CD4-positive, alpha-beta memory T cell (primary cell): ENCODE measurements at regions of chr16 and their contacts with region 1.

Region 1: DNA sequence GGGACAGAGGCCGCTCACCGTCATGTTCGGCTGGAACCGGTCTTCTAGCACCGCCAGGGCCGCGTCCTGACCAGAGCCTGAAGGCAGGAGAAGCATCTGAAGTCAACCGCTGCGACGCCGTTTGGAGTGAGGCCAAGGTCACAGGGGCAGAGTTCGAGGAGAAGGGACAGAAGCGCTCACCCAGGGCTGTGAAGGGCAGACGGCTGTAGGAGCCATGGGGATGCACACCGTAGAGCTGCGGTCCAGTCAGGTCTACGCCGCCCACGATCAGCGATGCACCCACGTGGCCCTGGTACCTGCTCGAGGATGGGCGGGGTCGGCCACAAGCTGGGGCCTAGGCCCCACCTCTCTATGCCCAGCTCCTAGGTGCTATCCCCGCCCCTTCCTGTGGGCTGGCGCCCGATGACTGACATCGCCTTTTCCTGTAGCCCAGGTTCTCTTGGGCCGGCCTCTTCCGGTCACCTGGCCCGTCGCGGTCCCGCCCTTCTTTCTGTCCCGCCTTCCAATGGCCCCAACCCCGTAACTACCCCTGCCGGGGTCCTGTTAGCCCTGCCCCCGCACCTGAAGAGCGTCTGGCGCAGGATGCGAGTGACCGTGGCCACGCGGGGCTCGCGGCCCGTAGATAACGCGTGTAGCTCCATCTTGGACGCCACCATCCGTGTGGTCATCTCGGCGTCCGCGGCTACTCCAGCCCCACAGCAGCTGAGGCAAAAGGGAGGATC is 1.1 kb downstream of the PSMB10 start:
- DNase-seq: peak; percentile 91 to 99 (median 95)
- H3K4me3 ChIP-seq: peak overlapping the region; percentile 81 to 98
- H3K4me3 Mint-ChIP-seq: peak overlapping the region; percentile 96 to 100 (median 99)
- H3K27ac ChIP-seq: peak overlapping the region; percentile 81
- H3K27ac Mint-ChIP-seq: peak overlapping the region; percentile 96 to 99 (median 98)
- H3K4me1 ChIP-seq: peaks cover 35% of the 10 kb centered on the region
- H3K4me1 Mint-ChIP-seq: peaks cover 21 to 50% (median 40%) of the 10 kb centered on the region in 4 donors
- H3K27me3 ChIP-seq: no peaks in the 10 kb centered on the region
- H3K27me3 Mint-ChIP-seq: no peaks in the 10 kb centered on the region

Region 2: DNA sequence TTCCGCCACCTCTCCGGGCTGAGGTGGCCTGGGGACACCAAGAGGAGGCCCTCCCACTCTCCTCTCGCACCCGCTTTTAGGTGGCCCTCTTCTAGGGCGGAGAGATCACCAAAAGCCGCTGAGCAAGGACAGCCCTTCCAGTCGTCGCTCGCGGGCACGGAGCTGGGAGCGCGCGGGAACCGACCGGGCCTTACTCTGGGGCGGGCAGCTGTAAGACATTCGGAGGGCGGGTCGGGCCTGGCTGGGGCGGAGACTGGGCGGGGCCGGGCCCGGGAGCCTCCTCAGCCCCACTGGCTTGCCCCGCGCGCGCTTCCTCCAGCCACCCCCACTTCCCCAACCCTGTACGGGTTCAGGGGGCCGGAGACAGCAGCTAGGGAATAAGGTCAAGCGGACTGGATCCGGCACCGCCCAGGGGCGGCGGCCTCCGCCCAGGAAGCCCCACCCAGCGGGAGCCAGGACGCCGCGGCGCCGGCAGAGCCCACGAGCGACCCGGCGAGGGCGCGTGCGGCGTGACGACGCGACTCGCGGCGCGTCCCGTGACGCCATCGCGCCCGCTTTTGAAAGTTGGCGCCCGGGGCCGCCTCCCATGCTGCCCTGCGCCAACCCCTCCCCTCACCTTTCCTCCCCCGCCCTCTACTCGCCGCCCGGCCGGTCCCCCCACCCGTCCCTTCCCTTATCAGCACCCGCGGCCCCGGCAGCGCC is 373.6 kb before region 1 on chr16:
- CTCF ChIA-PET with region 1: no interaction called
- POLR2A ChIA-PET with region 1: interaction called, 4 read pairs
- intact Hi-C with region 1: loop called (anchors 1 kb)
- DNase-seq: peak; percentile 96 to 98 (median 97)
- H3K4me3 ChIP-seq: peak overlapping the region; percentile 61 to 78
- H3K4me3 Mint-ChIP-seq: peak overlapping the region; percentile 89 to 97 (median 91)
- H3K27ac ChIP-seq: peak overlapping the region; percentile 73
- H3K27ac Mint-ChIP-seq: peak overlapping the region; percentile 92 to 97 (median 96)
- H3K4me1 ChIP-seq: peaks cover 52% of the 10 kb centered on the region
- H3K4me1 Mint-ChIP-seq: peaks cover 23 to 53% (median 37%) of the 10 kb centered on the region in 4 donors
- H3K27me3 ChIP-seq: no peaks in the 10 kb centered on the region
- H3K27me3 Mint-ChIP-seq: no peaks in the 10 kb centered on the region

Region 3: GRCh38 chr16:67816240-67817031 is 119.1 kb before region 1 on chr16:
- CTCF ChIA-PET with region 1: interaction called, 14 read pairs
- POLR2A ChIA-PET with region 1: interaction called, 8 read pairs
- intact Hi-C with region 1: no loop called
- DNase-seq: peak; percentile 83 to 92 (median 85)
- H3K4me3 ChIP-seq: no peak overlapping the region
- H3K4me3 Mint-ChIP-seq: peak overlapping the region in 1 of 8 donors; percentile 61
- H3K27ac ChIP-seq: no peak overlapping the region
- H3K27ac Mint-ChIP-seq: peak overlapping the region in 4 of 7 donors; percentile 75 to 92 (median 82)
- H3K4me1 ChIP-seq: no peaks in the 10 kb centered on the region
- H3K4me1 Mint-ChIP-seq: peaks cover 0 to 8% (median 5%) of the 10 kb centered on the region in 4 donors
- H3K27me3 ChIP-seq: no peaks in the 10 kb centered on the region
- H3K27me3 Mint-ChIP-seq: no peaks in the 10 kb centered on the region

Region 4: GRCh38 chr16:67883872-67884261 is 51.7 kb before region 1 on chr16:
- CTCF ChIA-PET with region 1: interaction called, 61 read pairs
- POLR2A ChIA-PET with region 1: interaction called, 8 read pairs
- intact Hi-C with region 1: no loop called
- DNase-seq: peak; percentile 68 to 75 (median 71)
- H3K4me3 ChIP-seq: no peak overlapping the region
- H3K4me3 Mint-ChIP-seq: no peak overlapping the region
- H3K27ac ChIP-seq: no peak overlapping the region
- H3K27ac Mint-ChIP-seq: peak overlapping the region in 4 of 7 donors; percentile 22 to 83 (median 40)
- H3K4me1 ChIP-seq: no peaks in the 10 kb centered on the region
- H3K4me1 Mint-ChIP-seq: peaks cover 0 to 1% (median 0%) of the 10 kb centered on the region in 4 donors
- H3K27me3 ChIP-seq: no peaks in the 10 kb centered on the region
- H3K27me3 Mint-ChIP-seq: no peaks in the 10 kb centered on the region

Region 5: DNA sequence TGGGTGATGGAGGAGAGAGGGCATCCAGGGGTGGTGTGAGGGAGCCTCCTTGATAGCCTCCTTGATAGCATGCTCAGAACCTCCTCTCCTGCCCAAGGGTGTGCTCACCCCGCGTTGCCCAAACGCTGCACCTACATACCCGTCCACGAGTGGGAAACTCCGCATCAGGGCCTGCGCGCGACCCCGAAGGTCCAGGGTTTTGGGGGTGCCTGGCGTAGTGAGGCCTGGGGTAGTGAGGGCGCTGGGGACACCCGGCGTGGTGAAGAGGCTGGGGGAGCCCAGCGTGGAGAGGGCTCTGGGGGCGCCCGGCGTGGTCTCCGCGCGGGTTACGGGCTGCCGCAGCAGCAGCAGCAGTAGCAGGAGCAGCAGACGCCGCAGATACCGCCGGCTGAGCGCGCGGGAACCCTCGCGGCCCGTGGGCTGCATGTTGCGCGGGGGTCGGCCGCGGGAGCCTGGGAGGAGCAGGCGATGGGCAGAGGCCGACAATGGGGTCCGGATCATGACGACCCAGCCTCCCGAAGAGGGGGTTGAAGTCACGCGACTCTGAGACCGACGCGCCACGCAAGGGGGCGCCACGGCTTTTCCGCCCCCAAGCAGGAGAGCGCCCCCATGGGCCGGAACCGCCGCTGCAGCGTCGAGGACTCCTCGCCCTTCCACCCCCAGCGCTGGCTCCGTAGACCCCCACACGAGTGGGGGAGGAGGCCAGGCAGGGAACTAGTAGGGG is 44.6 kb after region 1 on chr16 and contains the start of gene DPEP3:
- CTCF ChIA-PET with region 1: interaction called, 3 read pairs
- POLR2A ChIA-PET with region 1: interaction called, 22 read pairs
- intact Hi-C with region 1: no loop called
- DNase-seq: no peak
- H3K4me3 ChIP-seq: no peak within 1 kb of the TSS
- H3K4me3 Mint-ChIP-seq: no peak within 1 kb of the TSS
- H3K27ac ChIP-seq: no peak within 1 kb of the TSS
- H3K27ac Mint-ChIP-seq: no peak within 1 kb of the TSS
- H3K4me1 ChIP-seq: peaks cover 23% of the 10 kb centered on the region
- H3K4me1 Mint-ChIP-seq: peaks cover 10 to 27% (median 17%) of the 10 kb centered on the region in 4 donors
- H3K27me3 ChIP-seq: no peaks in the 10 kb centered on the region
- H3K27me3 Mint-ChIP-seq: peaks cover 1 to 3% of the 10 kb centered on the region in 2 donors
- total RNA-seq, gene DPEP3: 0.91 to 1.2 TPM

Region 6: GRCh38 chr16:68005786-68006286 is 70.3 kb after region 1 on chr16:
- CTCF ChIA-PET with region 1: interaction called, 3 read pairs
- POLR2A ChIA-PET with region 1: interaction called, 33 read pairs
- intact Hi-C with region 1: no loop called
- DNase-seq: peak; percentile 61 to 77 (median 67)
- H3K4me3 ChIP-seq: no peak overlapping the region
- H3K4me3 Mint-ChIP-seq: peak overlapping the region in 7 of 8 donors; percentile 46 to 76 (median 60)
- H3K27ac ChIP-seq: peak overlapping the region; percentile 29
- H3K27ac Mint-ChIP-seq: peak overlapping the region; percentile 81 to 97 (median 95)
- H3K4me1 ChIP-seq: peaks cover 56% of the 10 kb centered on the region
- H3K4me1 Mint-ChIP-seq: peaks cover 22 to 53% (median 37%) of the 10 kb centered on the region in 4 donors
- H3K27me3 ChIP-seq: no peaks in the 10 kb centered on the region
- H3K27me3 Mint-ChIP-seq: no peaks in the 10 kb centered on the region

Region 7: DNA sequence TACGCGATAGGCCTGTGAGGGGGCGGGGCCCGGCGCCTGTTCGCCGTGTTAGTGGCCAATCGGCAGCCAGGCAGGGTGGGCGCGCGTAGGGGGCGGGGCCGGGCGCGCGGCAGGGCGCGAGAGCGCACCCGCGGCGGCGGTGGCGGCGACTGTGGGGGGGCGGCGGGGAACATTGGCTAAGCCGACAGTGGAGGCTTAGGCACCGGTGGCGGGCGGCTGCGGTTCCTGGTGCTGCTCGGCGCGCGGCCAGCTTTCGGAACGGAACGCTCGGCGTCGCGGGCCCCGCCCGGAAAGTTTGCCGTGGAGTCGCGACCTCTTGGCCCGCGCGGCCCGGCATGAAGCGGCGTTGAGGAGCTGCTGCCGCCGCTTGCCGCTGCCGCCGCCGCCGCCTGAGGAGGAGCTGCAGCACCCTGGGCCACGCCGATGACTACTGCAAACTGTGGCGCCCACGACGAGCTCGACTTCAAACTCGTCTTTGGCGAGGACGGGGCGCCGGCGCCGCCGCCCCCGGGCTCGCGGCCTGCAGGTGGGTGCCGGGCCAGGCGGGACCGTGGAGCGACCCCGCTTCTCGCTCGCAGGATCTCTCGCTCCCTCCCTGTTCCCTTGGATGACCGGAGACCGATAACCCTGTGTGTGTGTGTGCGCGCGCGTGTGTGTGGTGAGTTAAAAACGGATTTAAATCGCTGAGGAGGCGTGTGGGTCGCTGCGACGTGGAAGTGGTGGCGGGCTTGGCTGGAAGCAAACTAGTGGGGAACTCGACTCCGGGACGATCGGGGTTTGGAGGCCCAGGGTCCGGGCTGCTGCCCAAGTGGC is 149.9 kb after region 1 on chr16 and contains the start of gene NFATC3:
- CTCF ChIA-PET with region 1: interaction called, 3 read pairs
- POLR2A ChIA-PET with region 1: interaction called, 34 read pairs
- intact Hi-C with region 1: loop called (anchors 2 kb)
- DNase-seq: peak; percentile 98 to 99 (median 98)
- H3K4me3 ChIP-seq: peak within 1 kb of the TSS; percentile 79 to 92
- H3K4me3 Mint-ChIP-seq: peak within 1 kb of the TSS; percentile 90 to 99 (median 94)
- H3K27ac ChIP-seq: peak within 1 kb of the TSS; percentile 89
- H3K27ac Mint-ChIP-seq: peak within 1 kb of the TSS; percentile 86 to 97 (median 92)
- H3K4me1 ChIP-seq: peaks cover 78% of the 10 kb centered on the region
- H3K4me1 Mint-ChIP-seq: peaks cover 53 to 80% (median 63%) of the 10 kb centered on the region in 4 donors
- H3K27me3 ChIP-seq: no peaks in the 10 kb centered on the region
- H3K27me3 Mint-ChIP-seq: no peaks in the 10 kb centered on the region
- total RNA-seq, gene NFATC3: 127 to 134 TPM